PC-9 (cell line): ENCODE measurements at regions of chr10 and their contacts with region 1.

Region 1: GRCh38 chr10:51510231-51510630 is 189.2 kb downstream of the CSTF2T start:
- DNase-seq: no peak
- H3K4me3 ChIP-seq: no peak overlapping the region
- H3K27ac ChIP-seq: no peak overlapping the region
- H3K4me1 ChIP-seq: no peaks in the 10 kb centered on the region
- H3K27me3 ChIP-seq: no peaks in the 10 kb centered on the region
- CTCF ChIP-seq: no peak

Region 2: GRCh38 chr10:51224671-51225161 is 285.5 kb before region 1 on chr10:
- CTCF ChIA-PET with region 1: no interaction called
- POLR2A ChIA-PET with region 1: no interaction called
- intact Hi-C with region 1: no loop called
- DNase-seq: no peak
- H3K4me3 ChIP-seq: no peak overlapping the region
- H3K27ac ChIP-seq: no peak overlapping the region
- H3K4me1 ChIP-seq: no peaks in the 10 kb centered on the region
- H3K27me3 ChIP-seq: no peaks in the 10 kb centered on the region
- CTCF ChIP-seq: no peak

Region 3: DNA sequence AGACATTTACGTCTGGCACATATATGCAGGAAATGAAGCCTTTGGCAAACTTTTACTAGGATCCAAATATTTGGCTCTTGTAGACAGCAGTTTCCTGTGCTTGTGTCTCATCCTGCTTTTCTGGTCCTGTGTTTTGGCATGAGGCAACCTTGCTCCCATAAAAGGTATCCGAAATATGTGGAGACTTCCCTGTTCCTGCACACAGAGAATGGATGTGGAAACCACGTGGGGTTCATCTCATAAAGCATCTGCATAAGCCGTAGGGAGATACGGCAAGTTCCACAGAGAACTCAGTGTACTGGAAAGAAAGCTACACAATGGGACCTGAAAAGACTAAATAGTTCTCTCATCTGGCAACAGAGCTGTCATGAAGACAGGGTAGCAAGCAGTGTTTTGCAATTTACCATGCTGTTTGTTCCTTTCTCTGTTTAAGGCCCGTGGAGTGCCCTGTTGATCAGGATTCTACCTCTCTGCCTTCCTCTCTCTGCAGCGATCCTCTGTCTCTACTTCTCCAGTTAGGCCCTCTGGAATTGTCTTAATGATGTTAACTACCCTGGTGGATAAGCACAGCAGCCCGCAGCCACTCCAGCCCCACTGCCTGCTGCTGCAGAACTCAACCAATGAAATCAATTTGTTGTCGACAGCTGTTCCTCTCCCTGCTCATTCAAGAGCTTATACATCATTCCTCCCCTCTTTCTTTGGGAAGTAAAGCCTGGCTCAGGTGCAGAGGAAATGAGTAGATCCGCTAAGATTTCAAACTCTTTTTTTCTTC is 104.5 kb before region 1 on chr10:
- CTCF ChIA-PET with region 1: interaction called, 12 read pairs
- POLR2A ChIA-PET with region 1: no interaction called
- intact Hi-C with region 1: no loop called
- DNase-seq: no peak
- H3K4me3 ChIP-seq: no peak overlapping the region
- H3K27ac ChIP-seq: no peak overlapping the region
- H3K4me1 ChIP-seq: no peaks in the 10 kb centered on the region
- H3K27me3 ChIP-seq: no peaks in the 10 kb centered on the region
- CTCF ChIP-seq: no peak